CD8-positive, alpha-beta memory T cell (primary cell): ENCODE measurements at regions of chr22 and their contacts with region 1.

Region 1: DNA sequence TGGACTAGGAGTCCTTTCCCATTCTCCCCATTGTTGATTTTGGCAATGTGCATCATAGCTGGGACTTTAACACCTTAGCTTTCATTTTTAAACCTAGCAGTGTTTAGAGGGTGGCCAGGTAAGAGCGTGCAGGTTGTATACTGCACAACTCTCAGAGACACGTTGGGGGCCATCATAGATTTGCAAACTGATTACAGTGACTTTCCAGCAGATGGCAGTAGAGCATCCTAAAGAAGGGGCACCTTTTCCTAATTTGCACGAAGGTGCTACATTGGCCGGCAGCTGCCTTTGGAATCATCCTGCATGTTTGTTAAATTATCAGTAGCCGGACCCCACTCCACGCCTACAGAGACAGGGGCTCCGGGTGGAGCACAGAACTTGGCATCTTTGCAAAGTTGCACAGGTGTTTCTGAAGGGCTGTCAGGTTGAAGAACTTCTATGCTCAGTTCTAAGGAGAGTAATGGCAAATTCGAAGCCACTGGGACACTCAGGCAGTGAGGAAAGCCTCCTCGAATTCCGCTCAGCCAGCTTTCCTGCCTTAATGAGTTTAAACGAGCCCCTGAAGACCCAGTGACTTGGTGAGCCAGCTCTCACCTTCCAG is 7.7 kb downstream of the LHFPL7 start:
- DNase-seq: peak in 3 of 5 donors; percentile 10 to 32 (median 28)
- H3K4me3 ChIP-seq: no peak overlapping the region
- H3K4me3 Mint-ChIP-seq: no peak overlapping the region
- H3K27ac ChIP-seq: no peak overlapping the region
- H3K27ac Mint-ChIP-seq: no peak overlapping the region
- H3K4me1 ChIP-seq: no peaks in the 10 kb centered on the region
- H3K4me1 Mint-ChIP-seq: no peaks in the 10 kb centered on the region
- H3K27me3 ChIP-seq: peaks cover 5% of the 10 kb centered on the region
- H3K27me3 Mint-ChIP-seq: peaks cover 8 to 11% of the 10 kb centered on the region in 2 donors

Region 2: DNA sequence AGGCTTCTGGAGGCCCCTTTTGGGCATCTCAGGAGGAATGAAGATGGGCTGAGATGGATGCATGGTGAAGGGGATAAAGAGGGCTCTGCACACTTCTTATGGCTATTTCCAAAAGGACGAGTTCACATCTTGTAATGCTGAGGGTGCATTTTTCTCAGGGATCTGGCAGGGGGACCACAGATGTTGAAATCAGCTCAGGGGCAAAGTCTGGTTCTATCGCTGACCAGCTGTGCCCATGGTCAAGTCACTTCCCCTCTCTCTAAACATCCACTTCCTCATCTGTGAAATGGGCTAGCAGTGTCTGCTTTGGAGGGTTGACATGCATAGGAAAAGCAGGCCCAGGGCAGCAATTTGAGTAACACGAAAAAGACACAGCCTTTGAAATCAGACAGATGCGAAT is 18.8 kb before region 1 on chr22:
- CTCF ChIA-PET with region 1: no interaction called
- POLR2A ChIA-PET with region 1: no interaction called
- DNase-seq: no peak
- H3K4me3 ChIP-seq: no peak overlapping the region
- H3K4me3 Mint-ChIP-seq: no peak overlapping the region
- H3K27ac ChIP-seq: no peak overlapping the region
- H3K27ac Mint-ChIP-seq: peak overlapping the region in 1 of 8 donors; percentile 16
- H3K4me1 ChIP-seq: no peaks in the 10 kb centered on the region
- H3K4me1 Mint-ChIP-seq: no peaks in the 10 kb centered on the region
- H3K27me3 ChIP-seq: no peaks in the 10 kb centered on the region
- H3K27me3 Mint-ChIP-seq: no peaks in the 10 kb centered on the region

Region 3: DNA sequence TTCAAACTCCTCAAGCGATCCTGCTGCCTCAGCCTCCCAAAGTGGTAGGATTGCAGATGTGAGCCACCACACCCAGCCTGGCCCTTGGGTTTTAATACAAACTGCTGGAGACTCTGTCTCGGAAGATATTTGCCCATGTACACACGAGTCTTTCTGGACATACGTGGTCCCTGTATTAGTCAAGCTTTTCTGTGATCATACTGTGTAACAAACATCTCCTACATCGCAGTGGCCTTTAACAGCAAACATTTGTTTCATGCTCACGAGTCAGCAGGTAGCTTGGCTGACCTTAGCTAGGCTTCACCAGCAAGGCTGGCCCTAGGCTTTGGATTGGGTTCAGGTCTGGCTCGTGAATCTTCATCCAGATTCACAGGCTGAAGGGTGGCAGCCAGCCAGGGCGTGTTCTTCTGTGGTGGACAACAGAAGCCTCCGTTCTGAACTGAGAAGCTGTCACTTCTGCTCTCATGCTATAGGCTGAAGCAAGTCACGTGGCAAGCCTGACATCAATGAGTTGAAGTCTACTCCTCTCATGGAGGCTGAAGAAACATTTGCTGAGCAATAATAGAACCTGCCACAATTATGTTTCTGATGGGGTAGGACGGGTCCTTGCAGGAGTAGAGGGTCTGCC is 22.5 kb after region 1 on chr22:
- CTCF ChIA-PET with region 1: no interaction called
- POLR2A ChIA-PET with region 1: no interaction called
- DNase-seq: no peak
- H3K4me3 ChIP-seq: no peak overlapping the region
- H3K4me3 Mint-ChIP-seq: no peak overlapping the region
- H3K27ac ChIP-seq: no peak overlapping the region
- H3K27ac Mint-ChIP-seq: no peak overlapping the region
- H3K4me1 ChIP-seq: no peaks in the 10 kb centered on the region
- H3K4me1 Mint-ChIP-seq: no peaks in the 10 kb centered on the region
- H3K27me3 ChIP-seq: no peaks in the 10 kb centered on the region
- H3K27me3 Mint-ChIP-seq: peaks cover 2 to 7% of the 10 kb centered on the region in 2 donors

Region 4: GRCh38 chr22:25048659-25049647 is 110.1 kb after region 1 on chr22:
- CTCF ChIA-PET with region 1: interaction called, 26 read pairs
- POLR2A ChIA-PET with region 1: no interaction called
- DNase-seq: peak; percentile 54 to 76 (median 59)
- H3K4me3 ChIP-seq: no peak overlapping the region
- H3K4me3 Mint-ChIP-seq: no peak overlapping the region
- H3K27ac ChIP-seq: no peak overlapping the region
- H3K27ac Mint-ChIP-seq: peak overlapping the region in 1 of 8 donors; percentile 43
- H3K4me1 ChIP-seq: no peaks in the 10 kb centered on the region
- H3K4me1 Mint-ChIP-seq: no peaks in the 10 kb centered on the region
- H3K27me3 ChIP-seq: no peaks in the 10 kb centered on the region
- H3K27me3 Mint-ChIP-seq: no peaks in the 10 kb centered on the region